ENCODE measurements at regions of chr16 and their contacts with region 1.

Region 1: DNA sequence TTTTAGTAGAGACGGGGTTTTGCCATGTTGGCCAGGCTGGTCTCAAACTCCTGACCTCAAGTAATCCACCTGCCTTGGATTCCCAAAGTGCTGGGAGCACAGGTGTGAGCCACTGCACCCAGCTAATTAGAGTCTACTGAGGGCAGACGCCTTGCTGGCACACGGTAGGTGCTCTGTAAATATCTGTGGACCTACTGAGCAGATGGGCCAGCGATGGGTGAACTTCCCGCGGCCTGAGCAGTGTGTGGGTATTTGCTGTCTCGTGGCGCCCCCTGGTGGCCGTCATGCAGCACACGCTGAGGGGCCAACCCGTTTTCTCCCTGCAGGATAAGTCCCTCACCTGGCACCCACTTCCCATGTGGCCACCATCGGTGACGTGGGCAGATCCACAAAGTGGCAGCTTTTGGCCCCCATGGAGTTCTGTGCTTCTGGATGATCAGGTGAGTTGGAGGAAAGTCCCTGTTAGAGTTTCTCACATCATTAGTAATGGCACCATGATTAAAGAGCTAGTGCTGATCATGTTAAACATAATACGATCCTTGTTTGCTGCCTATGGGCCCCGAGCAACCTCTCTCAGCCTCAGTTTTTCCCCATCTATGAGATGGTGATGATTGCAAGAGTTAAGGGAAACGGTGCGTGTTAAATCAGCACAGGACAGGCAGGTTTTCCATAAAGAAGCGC is 40.7 kb downstream of the ZDHHC7 start:
- DNase-seq: peak; percentile 65 to 74
- ATAC-seq: peak; percentile 49 to 78
- H3K4me3 ChIP-seq: no peak overlapping the region
- H3K27ac ChIP-seq: no peak overlapping the region
- H3K4me1 ChIP-seq: peaks cover 9 to 12% of the 10 kb centered on the region in 2 donors
- H3K27me3 ChIP-seq: no peaks in the 10 kb centered on the region
- CTCF ChIP-seq: peak; percentile 82 to 97 (median 96)
- POLR2A ChIP-seq: no peak

Region 2: DNA sequence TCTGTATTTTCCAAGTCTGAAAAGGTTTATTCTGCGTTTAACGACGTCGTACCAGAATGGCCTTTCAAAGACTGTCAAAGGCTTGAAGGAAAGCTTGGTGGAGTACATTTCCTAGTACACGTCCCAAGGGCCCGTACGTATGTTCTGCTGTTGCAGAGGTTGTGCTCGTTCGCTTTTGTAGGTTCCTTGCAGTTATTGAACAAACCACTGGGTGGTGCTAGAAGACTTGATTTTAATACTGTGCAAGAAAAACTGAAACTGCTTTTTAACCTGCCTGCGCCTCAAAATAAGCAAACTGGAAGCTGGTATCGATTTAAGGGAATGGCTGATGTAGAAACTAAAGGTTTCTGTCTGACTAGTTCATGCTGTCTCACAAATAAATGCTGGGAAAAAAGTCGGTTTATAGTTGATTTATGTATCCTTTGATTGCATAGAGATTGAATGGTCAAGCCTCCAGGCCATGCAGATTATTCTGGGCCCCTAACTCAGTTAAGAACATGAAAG is 216.2 kb before region 1 on chr16:
- in situ Hi-C with region 1: loop called in 3 of 4 experiments (anchors 5 to 10 kb)
- intact Hi-C with region 1: loop called (anchors 1 kb)
- DNase-seq: peak; percentile 42 to 64
- ATAC-seq: peak; percentile 63 to 87
- H3K4me3 ChIP-seq: no peak overlapping the region
- H3K27ac ChIP-seq: no peak overlapping the region
- H3K4me1 ChIP-seq: peaks cover 28 to 37% of the 10 kb centered on the region in 2 donors
- H3K27me3 ChIP-seq: no peaks in the 10 kb centered on the region
- CTCF ChIP-seq: peak; percentile 72 to 84 (median 82)
- POLR2A ChIP-seq: no peak

Region 3: DNA sequence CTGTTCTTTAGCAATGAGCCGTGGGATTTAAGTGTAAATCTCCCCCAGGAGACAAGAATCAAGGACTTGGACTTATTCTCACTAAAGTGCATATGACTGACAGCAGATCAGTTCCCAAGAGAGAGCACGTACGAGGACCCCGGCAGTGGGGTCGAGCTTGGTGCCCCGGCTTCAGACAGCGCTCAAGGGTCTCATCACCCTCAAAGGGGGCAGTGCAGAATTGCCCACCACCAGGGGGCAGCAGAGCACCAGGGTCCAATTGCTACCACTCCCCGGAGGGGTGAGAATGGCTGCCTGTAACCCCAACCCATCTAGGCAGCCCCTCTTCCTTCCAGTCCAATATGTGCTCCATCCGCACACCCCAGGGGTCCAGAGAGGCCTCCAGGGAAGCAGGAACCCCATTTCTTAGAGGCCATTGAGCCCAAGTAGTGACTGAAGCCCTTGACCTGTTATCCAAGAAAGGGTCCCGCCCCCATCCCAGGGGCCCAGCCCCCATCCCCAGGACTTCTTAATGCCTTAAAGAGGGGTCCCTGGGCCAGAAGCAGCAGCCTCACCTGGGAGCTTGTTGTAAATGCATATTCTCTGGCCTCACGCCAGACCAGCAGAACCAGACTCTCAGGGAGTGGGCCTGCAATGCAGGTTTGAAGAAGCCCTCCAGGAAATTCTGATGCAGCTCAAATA is 45.4 kb before region 1 on chr16:
- in situ Hi-C with region 1: no loop called
- intact Hi-C with region 1: loop called (anchors 1 kb)
- DNase-seq: peak; percentile 33 to 55
- ATAC-seq: peak in 1 of 2 donors; percentile 36
- H3K4me3 ChIP-seq: no peak overlapping the region
- H3K27ac ChIP-seq: peak overlapping the region in 3 of 4 donors; percentile 8 to 71 (median 52)
- H3K4me1 ChIP-seq: peaks cover 33 to 42% of the 10 kb centered on the region in 2 donors
- H3K27me3 ChIP-seq: no peaks in the 10 kb centered on the region
- CTCF ChIP-seq: peak; percentile 81 to 95 (median 94)
- POLR2A ChIP-seq: no peak